ENCODE measurements at regions of chr3 and their contacts with region 1.

Region 1: GRCh38 chr3:107235928-107236315 is 141.3 kb upstream of the CCDC54 start:
- DNase-seq: peak in 1 of 2 experiments; percentile 64
- H3K4me3 ChIP-seq: peak overlapping the region; percentile 25
- H3K4me3 Mint-ChIP-seq: peak overlapping the region; percentile 66
- H3K27ac Mint-ChIP-seq: peak overlapping the region; percentile 27
- H3K4me1 ChIP-seq: 0 out of 2 replicates have a peak, but pooled peaks cover 5% of the 10 kb centered on the region
- H3K4me1 Mint-ChIP-seq: peaks cover 7% of the 10 kb centered on the region
- H3K27me3 ChIP-seq: no peaks in the 10 kb centered on the region; the same call in 1 of the 2 replicates
- H3K27me3 Mint-ChIP-seq: peaks cover 10% of the 10 kb centered on the region
- CTCF ChIP-seq: peak; percentile 71 to 79

Region 2: DNA sequence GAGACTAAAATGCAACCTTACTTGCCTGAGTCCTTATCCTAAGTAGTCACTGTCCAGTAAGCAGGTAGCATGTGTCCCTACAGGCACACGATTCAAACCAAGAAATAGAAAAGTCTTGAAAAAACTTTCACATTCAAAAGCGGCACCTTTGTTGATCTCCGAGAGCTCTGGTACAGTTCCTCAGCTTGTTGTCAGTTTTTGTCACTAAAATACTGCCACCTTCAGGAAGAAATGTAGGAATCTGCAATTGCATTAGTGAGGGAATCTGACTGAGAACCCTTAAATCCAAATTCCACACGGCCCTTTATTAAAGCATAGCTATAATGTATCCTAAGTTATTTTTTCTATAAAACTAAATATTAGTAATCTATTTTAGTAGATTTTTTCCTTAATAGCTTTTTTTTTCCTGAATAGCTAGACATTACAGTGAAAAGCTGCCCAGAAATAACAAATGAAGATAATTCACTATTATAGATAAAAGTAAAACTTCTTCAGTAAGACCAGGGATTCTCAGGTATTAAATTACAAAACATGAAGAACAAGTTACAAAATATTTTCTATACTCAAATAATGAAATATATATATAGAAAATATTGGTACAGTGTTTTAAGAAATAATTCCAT is 185.4 kb after region 1 on chr3:
- CTCF ChIA-PET with region 1: interaction called, 5 read pairs
- POLR2A ChIA-PET with region 1: no interaction called
- intact Hi-C with region 1: loop called (anchors 1 kb)
- DNase-seq: peak in 1 of 2 experiments; percentile 37
- H3K4me3 ChIP-seq: no peak overlapping the region
- H3K4me3 Mint-ChIP-seq: peak overlapping the region; percentile 15
- H3K27ac Mint-ChIP-seq: no peak overlapping the region
- H3K4me1 ChIP-seq: no peaks in the 10 kb centered on the region
- H3K4me1 Mint-ChIP-seq: no peaks in the 10 kb centered on the region
- H3K27me3 ChIP-seq: no peaks in the 10 kb centered on the region
- H3K27me3 Mint-ChIP-seq: peaks cover 16% of the 10 kb centered on the region
- CTCF ChIP-seq: peak; percentile 51 to 56

Region 3: DNA sequence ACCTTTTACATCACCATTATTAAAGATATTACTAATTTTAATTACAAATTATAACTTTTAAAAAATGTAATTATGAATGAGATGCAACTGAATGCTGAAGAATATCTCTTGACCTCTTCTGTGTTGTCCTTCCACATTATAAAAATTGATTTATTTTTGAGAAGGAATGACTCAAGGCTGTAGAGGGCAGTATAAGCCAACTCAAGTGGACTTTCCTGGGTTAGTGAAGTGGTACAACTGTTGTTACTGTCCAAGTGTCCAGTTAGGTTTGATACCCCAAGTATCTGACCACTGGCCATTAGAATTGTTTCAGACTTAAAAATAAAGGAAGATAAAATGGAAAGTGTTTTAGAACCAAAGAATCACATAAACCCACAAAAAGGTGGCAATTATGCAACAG is 338.7 kb after region 1 on chr3:
- CTCF ChIA-PET with region 1: no interaction called
- POLR2A ChIA-PET with region 1: no interaction called
- intact Hi-C with region 1: no loop called
- DNase-seq: peak in 1 of 2 experiments; percentile 21
- H3K4me3 ChIP-seq: no peak overlapping the region
- H3K4me3 Mint-ChIP-seq: no peak overlapping the region
- H3K27ac Mint-ChIP-seq: no peak overlapping the region
- H3K4me1 ChIP-seq: no peaks in the 10 kb centered on the region
- H3K4me1 Mint-ChIP-seq: no peaks in the 10 kb centered on the region
- H3K27me3 ChIP-seq: no peaks in the 10 kb centered on the region; the same call in 1 of the 2 replicates
- H3K27me3 Mint-ChIP-seq: peaks cover 15% of the 10 kb centered on the region
- CTCF ChIP-seq: peak; percentile 33 to 36

Region 4: DNA sequence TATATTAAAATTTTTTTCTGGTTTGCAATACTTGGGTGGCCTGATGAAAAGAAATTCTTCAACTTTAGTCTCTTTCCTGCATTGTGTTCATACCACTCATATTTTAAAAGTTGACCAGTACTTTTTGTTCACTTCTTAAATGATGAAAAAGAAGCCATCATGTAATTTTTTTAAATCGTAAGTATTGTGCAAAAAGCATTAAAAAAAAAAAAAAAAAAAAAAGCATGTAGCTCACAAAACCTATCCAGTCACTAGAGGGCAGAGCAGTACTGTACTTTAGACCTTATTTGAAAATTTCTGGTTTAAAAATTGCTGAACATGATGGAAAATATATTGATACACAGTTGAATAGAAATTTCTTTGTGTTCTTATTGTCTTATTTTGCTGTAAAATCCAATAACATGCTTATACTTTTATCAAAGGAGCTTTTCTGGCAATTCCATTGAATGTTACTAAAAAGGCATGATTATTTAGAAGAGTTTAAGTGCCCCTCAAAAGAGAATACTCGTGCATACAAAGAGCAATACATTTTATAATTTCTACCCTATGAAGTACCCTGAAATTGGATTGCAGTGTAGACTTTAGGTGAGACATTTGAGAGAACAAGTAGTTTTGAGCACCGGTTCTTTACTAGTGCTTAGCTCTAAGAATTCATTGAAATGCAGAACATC is 424.5 kb after region 1 on chr3:
- CTCF ChIA-PET with region 1: interaction called, 3 read pairs
- POLR2A ChIA-PET with region 1: no interaction called
- intact Hi-C with region 1: loop called (anchors 1 kb)
- DNase-seq: no peak
- H3K4me3 ChIP-seq: no peak overlapping the region
- H3K4me3 Mint-ChIP-seq: no peak overlapping the region
- H3K27ac Mint-ChIP-seq: no peak overlapping the region
- H3K4me1 ChIP-seq: no peaks in the 10 kb centered on the region
- H3K4me1 Mint-ChIP-seq: peaks cover 5% of the 10 kb centered on the region
- H3K27me3 ChIP-seq: no peaks in the 10 kb centered on the region
- H3K27me3 Mint-ChIP-seq: peaks cover 8% of the 10 kb centered on the region
- CTCF ChIP-seq: peak; percentile 49 to 63

Region 5: DNA sequence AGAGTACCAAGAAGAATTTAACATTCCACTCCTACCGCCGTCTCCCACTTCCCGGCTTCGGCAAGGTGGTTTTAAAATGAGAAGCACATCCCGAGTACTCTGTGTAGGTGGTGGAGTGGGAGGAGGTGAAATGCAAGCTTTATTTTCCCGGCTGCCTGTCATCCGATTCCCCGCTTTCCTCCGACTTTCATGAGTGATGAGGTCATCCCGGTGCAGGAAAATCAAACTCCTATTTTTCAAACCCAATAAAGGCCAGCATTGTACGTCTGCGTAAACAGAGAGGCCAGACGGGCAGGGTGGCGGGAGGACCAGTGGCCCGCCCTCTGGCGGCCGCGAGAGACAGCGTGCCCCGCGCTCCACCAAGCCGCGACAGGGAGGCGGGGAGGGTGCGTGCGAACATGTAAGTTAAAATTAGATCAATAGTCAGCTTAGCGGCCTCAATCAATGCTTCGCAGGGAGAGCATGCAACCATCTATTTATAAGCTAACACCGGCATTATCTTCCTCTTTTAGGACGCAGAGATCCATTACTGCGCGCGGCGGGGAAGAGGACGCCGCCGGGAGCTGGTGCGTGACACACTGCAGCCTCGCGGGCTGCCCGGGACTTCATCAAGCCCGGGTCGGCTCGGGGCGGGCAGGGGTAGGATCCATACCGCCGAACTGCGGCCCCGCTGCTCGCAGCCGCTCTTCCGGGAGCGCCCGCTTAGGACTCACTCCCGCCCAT is 691.6 kb after region 1 on chr3:
- CTCF ChIA-PET with region 1: no interaction called
- POLR2A ChIA-PET with region 1: no interaction called
- intact Hi-C with region 1: loop called (anchors 1 kb)
- DNase-seq: peak; percentile 37 to 64
- H3K4me3 ChIP-seq: peak overlapping the region; percentile 36
- H3K4me3 Mint-ChIP-seq: peak overlapping the region; percentile 74
- H3K27ac Mint-ChIP-seq: no peak overlapping the region
- H3K4me1 ChIP-seq: no peaks in the 10 kb centered on the region
- H3K4me1 Mint-ChIP-seq: peaks cover 5% of the 10 kb centered on the region
- H3K27me3 ChIP-seq: peaks cover 3% of the 10 kb centered on the region; the same call in 1 of the 2 replicates
- H3K27me3 Mint-ChIP-seq: peaks cover 10% of the 10 kb centered on the region
- CTCF ChIP-seq: peak; percentile 78 to 92

Measured in Caco-2 (cell line).